Activated T-helper 1 cell treated with anti-CD3 and anti-CD28 coated beads, Interleukin-12 subunit alpha, Interleukin-12 subunit beta, Interleukin-2, Interleukin-4 antibody, amounts not matched to agents 30 ng/mL and 10 ng/mL and 1 ng/mL, durations not matched to agents 14 hours and 24 hours and 36 hours (primary cell): ENCODE measurements at regions of chr6 and their contacts with region 1.

Region 1: GRCh38 chr6:135703621-135704020 is 147.9 kb upstream of the PDE7B start:
- DNase-seq: no peak
- H3K4me3 Mint-ChIP-seq: no peak overlapping the region
- H3K27ac Mint-ChIP-seq: peak overlapping the region; percentile 32
- H3K4me1 Mint-ChIP-seq: peaks cover 15% of the 10 kb centered on the region
- H3K27me3 Mint-ChIP-seq: peaks cover 3% of the 10 kb centered on the region

Region 2: GRCh38 chr6:135686784-135687301 is 16.8 kb before region 1 on chr6:
- intact Hi-C with region 1: loop called (anchors 1 kb)
- DNase-seq: no peak
- H3K4me3 Mint-ChIP-seq: no peak overlapping the region
- H3K27ac Mint-ChIP-seq: no peak overlapping the region
- H3K4me1 Mint-ChIP-seq: peaks cover 34% of the 10 kb centered on the region
- H3K27me3 Mint-ChIP-seq: peaks cover 4% of the 10 kb centered on the region